ENCODE measurements at regions of chrX and their contacts with region 1.

Region 1: GRCh38 chrX:154458114-154458953 is at the start of gene PLXNA3:
- DNase-seq: peak; percentile 75
- ATAC-seq: peak; percentile 84
- H3K4me3 Mint-ChIP-seq: peak within 1 kb of the TSS; percentile 93
- H3K27ac Mint-ChIP-seq: peak within 1 kb of the TSS; percentile 94
- H3K4me1 Mint-ChIP-seq: peaks cover 14% of the 10 kb centered on the region
- H3K27me3 Mint-ChIP-seq: no peaks in the 10 kb centered on the region
- CTCF ChIP-seq: no peak
- total RNA-seq, gene PLXNA3: 58.9 and 69.5 TPM in 2 replicates

Region 2: GRCh38 chrX:154436983-154437719 is 21.2 kb before region 1 on chrX and contains the start of gene GDI1:
- CTCF ChIA-PET with region 1: no interaction called
- POLR2A ChIA-PET with region 1: interaction called, 3 read pairs
- intact Hi-C with region 1: loop called (anchors 2 kb)
- DNase-seq: peak; percentile 62
- ATAC-seq: peak; percentile 69
- H3K4me3 Mint-ChIP-seq: peak within 1 kb of the TSS; percentile 88
- H3K27ac Mint-ChIP-seq: peak within 1 kb of the TSS; percentile 86
- H3K4me1 Mint-ChIP-seq: peaks cover 22% of the 10 kb centered on the region
- H3K27me3 Mint-ChIP-seq: no peaks in the 10 kb centered on the region
- CTCF ChIP-seq: no peak
- total RNA-seq, gene GDI1: 112 and 127 TPM in 2 replicates

Region 3: GRCh38 chrX:154443992-154444754 is 14.2 kb before region 1 on chrX and contains the start of gene FAM50A:
- CTCF ChIA-PET with region 1: no interaction called
- POLR2A ChIA-PET with region 1: interaction called, 4 read pairs
- intact Hi-C with region 1: loop called (anchors 1 kb)
- DNase-seq: peak; percentile 75
- ATAC-seq: peak; percentile 90
- H3K4me3 Mint-ChIP-seq: peak within 1 kb of the TSS; percentile 77
- H3K27ac Mint-ChIP-seq: peak within 1 kb of the TSS; percentile 66
- H3K4me1 Mint-ChIP-seq: peaks cover 5% of the 10 kb centered on the region
- H3K27me3 Mint-ChIP-seq: no peaks in the 10 kb centered on the region
- CTCF ChIP-seq: no peak
- total RNA-seq, gene FAM50A: 52.5 and 56.0 TPM in 2 replicates

Region 4: DNA sequence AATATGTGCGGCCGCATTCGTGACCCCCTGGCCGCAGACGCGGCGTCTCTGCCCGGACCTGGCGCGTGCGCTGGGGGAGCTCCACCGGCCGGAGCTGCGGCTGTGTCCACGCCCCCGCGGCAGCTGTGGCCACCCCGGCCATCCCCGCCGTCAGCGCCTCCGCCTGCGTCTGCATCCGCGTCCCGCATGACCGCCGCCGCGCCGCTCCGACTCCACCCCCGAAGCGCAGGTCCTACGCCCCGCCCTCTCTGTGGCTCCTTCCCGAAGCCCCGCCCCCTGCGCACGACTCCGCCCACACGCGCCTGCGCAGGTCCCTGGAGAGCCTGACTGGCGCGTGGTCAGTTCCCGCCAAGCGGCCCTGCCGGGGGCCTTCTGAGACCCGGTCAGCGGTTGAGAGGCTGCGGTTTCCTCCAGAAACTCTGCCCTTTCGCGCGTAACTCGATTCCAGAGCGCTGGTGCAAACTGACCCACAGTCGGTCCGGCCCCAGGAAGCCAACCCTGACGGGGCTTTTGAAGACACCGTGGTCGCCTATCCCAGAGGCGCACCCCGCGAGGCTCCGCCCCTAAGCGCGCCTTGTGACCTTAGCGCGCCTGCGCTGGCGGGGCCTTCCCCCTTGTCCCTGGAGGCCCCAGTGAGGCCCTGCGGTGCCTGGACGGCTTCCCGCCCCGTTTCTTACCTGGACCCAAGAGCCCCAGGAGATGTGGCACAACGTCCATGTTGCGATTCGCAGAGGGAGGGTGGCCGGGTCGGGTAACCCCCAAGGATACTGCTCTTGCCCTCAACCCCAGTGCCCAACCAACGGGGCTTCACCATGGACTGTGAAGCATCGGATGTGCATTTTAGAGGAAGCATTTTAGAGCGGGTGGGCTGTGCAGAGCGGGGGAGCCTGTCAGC is 20.6 kb after region 1 on chrX and contains the start of gene LAGE3:
- CTCF ChIA-PET with region 1: no interaction called
- POLR2A ChIA-PET with region 1: interaction called, 7 read pairs
- intact Hi-C with region 1: loop called (anchors 1 kb)
- DNase-seq: peak; percentile 95
- ATAC-seq: peak; percentile 90
- H3K4me3 Mint-ChIP-seq: peak within 1 kb of the TSS; percentile 80
- H3K27ac Mint-ChIP-seq: peak within 1 kb of the TSS; percentile 88
- H3K4me1 Mint-ChIP-seq: peaks cover 23% of the 10 kb centered on the region
- H3K27me3 Mint-ChIP-seq: no peaks in the 10 kb centered on the region
- CTCF ChIP-seq: no peak
- total RNA-seq, gene LAGE3: 16.6 and 18.9 TPM in 2 replicates

Region 5: DNA sequence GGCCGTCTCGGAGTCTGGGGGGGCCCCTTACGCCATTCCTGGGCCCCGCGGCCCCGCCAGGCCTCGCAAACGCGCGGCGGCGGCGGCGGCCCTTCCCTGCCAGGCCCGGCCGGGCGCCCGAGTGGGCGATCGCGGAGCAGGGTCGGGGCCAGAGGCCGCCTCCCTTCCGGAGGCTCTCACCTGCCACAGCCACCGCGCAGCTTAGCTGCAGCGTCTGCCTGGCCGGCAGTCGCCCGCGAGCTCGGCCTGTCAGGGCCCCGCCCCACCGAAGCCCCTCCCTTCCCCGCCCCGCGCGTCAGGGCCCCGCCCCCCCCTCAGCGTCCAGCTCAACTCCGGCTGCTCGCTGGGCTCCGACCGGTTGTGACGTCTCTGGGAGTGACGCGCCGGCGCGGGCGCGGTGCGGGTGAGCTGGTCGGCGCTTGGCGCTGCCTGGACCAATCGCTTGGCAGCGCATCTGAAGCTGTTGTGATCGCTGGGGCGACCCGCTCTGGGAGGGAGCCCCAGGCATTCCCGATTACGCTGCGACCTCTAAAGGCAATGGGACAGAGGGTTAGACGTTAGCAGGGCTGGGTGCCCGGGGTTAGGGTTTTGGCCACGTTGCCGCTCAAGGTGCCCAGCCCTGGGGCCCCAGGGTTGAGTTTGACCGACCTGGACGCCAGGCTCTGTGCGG is 32.2 kb after region 1 on chrX and contains the start of gene SLC10A3:
- CTCF ChIA-PET with region 1: no interaction called
- POLR2A ChIA-PET with region 1: interaction called, 14 read pairs
- intact Hi-C with region 1: loop called (anchors 5 kb)
- DNase-seq: peak; percentile 77
- ATAC-seq: peak; percentile 82
- H3K4me3 Mint-ChIP-seq: peak within 1 kb of the TSS; percentile 88
- H3K27ac Mint-ChIP-seq: peak within 1 kb of the TSS; percentile 93
- H3K4me1 Mint-ChIP-seq: peaks cover 10% of the 10 kb centered on the region
- H3K27me3 Mint-ChIP-seq: no peaks in the 10 kb centered on the region
- CTCF ChIP-seq: no peak
- total RNA-seq, gene SLC10A3: 13.4 and 17.1 TPM in 2 replicates

Region 6: DNA sequence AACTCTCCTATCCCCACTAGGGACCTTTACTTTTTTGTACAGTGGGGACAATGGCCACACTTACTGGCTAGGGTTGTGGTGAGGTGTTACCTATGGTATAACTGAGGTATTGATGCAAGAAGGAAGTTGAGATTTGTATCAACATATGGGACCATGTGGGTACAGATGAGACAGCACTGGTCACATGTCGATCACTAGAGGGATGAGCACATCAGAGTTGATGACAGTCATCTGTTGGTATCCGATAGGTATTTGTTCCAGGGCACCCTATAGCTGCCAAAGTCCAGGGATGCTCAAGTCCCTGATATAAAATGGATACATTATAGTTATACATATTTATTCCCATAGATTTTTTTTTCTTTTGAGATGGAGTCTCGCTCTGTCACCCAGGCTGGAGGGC is 44.7 kb after region 1 on chrX:
- CTCF ChIA-PET with region 1: no interaction called
- POLR2A ChIA-PET with region 1: no interaction called
- intact Hi-C with region 1: no loop called
- DNase-seq: no peak
- ATAC-seq: no peak
- H3K4me3 Mint-ChIP-seq: no peak overlapping the region
- H3K27ac Mint-ChIP-seq: no peak overlapping the region
- H3K4me1 Mint-ChIP-seq: no peaks in the 10 kb centered on the region
- H3K27me3 Mint-ChIP-seq: no peaks in the 10 kb centered on the region
- CTCF ChIP-seq: no peak